ENCODE measurements at regions of chr6 and their contacts with region 1.

Region 1: GRCh38 chr6:108558372-108559096 is 2.2 kb upstream of the FOXO3 start:
- DNase-seq: peak; percentile 96 to 100 (median 98)

Region 2: GRCh38 chr6:107435798-107436197 is 1122.7 kb before region 1 on chr6:
- intact Hi-C with region 1: no loop called
- DNase-seq: no peak

Region 3: DNA sequence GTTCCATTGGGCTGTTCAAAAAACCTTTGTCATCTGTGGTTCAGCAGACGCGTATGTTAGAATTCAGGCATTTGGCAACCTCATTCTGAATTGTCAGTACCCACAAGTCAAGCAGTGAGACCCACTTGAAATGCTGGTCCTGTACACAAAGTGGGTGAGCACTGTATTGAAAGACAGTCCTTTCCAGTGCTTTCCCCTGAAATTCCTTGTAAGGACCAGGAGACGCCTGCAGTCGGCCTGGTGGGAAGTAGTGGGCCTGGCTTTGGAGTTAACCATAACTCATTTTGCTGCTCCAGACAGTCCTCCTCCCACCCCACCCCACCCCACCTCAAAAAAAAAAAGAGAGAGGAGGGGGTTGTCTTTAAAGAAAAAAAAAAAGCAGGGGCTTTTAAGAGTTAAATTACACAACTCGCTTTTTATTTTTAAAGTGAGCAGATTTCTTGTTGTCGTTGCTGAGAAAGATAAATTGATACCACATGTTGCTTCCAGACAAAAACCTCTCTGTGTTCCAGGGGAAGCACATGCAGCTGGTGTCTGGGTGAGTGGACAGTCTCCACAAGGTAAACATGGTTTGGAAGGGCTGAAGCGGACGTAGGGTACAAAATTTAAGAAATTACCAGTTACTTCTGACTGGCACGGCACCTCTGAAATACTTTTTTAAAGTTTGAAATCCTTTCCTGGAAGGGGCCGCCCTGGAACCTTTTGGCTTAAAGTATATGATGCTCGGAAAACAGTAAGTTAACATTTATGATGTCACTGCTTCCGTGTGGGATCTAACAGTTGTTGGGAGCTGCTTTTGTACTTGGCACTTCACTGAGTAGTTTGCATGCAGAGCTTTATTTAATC is 97.5 kb after region 1 on chr6:
- intact Hi-C with region 1: loop called (anchors 10 kb)
- DNase-seq: no peak

Region 4: DNA sequence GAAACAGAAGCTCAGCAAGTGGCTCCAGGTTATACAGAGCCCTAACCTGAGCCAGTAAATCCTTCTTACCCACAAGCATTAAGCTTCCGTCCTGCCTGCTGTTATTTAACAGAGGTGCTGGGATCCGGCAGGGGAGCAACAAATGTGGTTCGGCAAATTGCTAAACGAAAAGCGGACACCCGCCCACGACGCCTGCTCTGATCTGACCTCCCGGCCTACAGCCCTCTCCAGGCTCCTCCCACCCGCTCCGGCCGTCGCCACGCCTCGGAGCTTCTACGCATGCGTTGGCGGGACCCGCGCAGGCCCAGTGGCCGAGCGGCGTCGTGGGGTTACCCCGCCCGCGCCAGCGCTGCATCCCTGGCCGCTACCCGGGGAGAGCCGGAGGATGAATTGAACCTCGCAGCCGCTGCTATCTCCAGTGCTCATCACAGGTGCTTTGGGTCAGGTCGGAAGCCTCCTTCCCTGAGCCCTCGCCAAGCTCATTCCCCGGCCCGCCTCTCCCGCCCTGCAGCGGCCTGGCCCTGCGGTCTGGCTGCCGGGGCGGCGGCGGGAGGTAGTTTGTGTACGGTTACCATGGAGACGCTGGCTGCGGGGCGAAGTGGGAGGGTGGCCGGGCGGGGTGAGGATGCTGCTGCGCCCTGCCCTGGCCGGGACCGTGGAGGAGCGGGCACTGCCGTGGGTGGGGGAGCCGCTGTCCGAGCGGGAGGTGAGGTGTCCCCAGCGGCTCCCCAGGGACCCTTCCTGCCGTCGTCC is 289.8 kb after region 1 on chr6 and contains the start of gene ARMC2:
- intact Hi-C with region 1: loop called (anchors 5 kb)
- DNase-seq: peak; percentile 85 to 99 (median 93)

Region 5: DNA sequence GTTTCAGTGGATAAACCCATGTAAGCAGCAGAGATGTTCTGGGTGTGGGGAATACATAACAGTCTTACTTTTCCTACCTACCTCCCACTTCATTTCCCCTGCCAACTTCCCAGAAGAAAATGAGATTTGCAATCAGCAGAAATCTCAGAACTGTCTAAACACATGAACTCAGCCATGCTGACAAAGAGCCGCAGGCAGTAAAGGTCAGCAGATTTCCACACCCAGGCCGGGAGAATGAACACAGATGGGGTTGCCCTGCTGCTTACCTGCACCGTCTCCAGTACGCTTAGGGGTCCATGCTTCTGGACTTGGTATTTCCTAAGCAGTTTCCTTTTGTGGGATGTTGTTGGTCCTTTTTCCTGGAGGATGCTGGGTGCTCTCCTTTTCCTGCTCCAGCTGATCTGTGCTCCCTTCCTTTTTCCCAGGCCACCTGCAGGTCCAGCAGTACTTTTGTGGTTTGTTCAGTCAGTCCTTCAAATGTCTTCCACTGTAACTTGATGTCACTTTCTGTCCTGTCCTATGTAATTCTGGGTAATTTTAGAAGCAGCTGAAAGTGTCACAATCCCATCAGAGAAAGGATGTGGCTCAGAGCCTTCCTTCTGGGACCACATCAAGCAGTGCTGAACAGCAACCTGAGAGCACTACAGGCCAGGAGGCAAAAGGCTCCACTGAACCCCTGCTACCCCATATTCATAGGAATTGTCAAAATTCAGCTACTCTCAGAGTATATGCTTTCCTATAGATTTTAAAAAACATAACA is 665.8 kb after region 1 on chr6:
- intact Hi-C with region 1: no loop called
- DNase-seq: no peak

Region 6: DNA sequence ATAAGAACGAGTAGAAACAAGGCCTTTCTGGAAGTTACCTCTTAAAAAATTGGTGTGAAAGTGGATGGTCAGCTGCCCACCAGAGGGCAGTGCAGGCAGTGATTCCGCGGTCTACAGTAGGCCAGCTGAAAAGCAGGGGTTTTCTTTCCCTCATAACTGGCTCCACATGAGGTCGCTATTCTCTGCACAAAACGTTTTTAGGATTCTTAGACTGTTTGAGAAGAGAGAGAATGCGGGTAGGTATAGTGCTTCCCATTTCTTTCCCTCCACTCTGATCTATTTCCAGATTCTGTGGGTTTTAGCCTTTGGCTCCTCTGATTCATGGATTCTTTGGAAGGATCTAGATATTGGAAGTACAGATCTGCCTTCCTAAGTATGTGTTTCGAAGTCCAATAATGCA is 1146.7 kb after region 1 on chr6:
- intact Hi-C with region 1: no loop called
- DNase-seq: peak; percentile 57 to 96 (median 82)

Measured in posterior cingulate gyrus (tissue), 11 donors.